Tibial artery (tissue), 4 donors: ENCODE measurements at regions of chr7 and their contacts with region 1.

Region 1: DNA sequence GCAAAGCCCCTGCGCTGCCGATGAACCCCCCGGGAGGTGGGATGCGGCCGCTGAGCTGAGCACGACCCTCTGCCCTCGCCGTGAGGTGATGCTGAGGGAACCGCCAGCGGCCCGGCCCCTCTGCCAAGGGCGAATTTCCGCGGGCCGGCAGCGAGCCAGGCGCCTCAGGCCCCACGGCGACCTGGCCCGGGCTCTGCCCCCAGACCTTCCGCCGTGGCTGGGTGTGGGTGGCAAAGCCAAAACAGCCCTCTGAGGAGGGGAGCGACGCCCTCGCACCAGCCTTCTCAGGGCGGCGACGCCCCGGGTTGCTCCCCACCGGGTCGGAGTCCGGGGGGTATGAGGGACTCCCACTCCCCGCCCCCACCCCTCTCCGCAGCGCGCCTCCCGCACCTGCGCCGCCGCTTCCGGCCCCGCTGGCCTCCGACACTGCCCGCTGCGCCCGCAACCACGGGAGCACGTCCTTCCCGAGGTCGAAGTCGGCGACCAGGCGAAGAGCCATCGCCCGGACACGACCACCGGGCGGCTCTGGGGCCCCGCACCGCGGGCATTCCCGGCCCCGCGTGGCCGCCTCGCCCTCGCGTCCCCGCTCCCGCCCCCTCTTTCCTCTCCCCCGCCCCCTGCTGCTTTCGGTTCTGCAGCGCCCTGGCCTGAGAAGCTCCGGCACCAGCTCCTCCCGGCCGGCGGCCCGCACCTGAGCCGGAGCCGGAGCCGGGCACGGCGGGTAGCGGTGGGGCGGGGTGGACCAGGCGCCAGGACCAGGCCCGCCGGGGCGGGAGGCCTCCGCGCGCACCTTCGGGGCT is at the start of gene GSAP:
- DNase-seq: peak; percentile 37 to 77
- H3K4me3 ChIP-seq: peak within 1 kb of the TSS; percentile 88 to 92
- H3K27ac ChIP-seq: peak within 1 kb of the TSS; percentile 67 to 70
- H3K4me1 ChIP-seq: peaks cover 0 to 13% (median 5%) of the 10 kb centered on the region in 4 donors
- H3K27me3 ChIP-seq: no peaks in the 10 kb centered on the region
- CTCF ChIP-seq: no peak

Region 2: GRCh38 chr7:77542409-77542808 is 126.4 kb after region 1 on chr7:
- intact Hi-C with region 1: loop called (anchors 10 kb)
- DNase-seq: no peak
- H3K4me3 ChIP-seq: no peak overlapping the region
- H3K27ac ChIP-seq: no peak overlapping the region
- H3K4me1 ChIP-seq: peaks cover 0 to 63% (median 23%) of the 10 kb centered on the region in 4 donors
- H3K27me3 ChIP-seq: no peaks in the 10 kb centered on the region
- CTCF ChIP-seq: no peak

Region 3: DNA sequence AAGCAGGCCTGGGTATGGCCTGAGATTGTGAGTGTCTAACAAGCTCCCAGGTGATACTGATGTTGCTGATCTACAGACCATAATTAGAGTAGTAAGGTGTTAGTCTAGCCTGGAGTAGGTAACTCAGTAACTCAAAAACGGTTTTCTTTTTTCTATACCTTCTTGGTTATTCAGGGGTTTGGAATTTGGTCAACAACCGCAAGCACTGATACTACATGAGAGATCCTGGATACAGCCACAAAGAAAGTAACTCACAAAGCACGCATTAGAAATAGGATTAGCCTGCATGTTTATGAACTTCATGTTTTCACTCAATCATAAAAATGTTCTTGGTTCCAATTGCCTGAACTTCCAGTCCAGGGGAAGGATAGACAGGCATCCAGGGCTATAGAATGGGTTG is 1234.0 kb after region 1 on chr7:
- intact Hi-C with region 1: no loop called
- DNase-seq: no peak
- H3K4me3 ChIP-seq: no peak overlapping the region
- H3K27ac ChIP-seq: no peak overlapping the region
- H3K4me1 ChIP-seq: no peaks in the 10 kb centered on the region
- H3K27me3 ChIP-seq: no peaks in the 10 kb centered on the region
- CTCF ChIP-seq: no peak